B cell (primary cell): ENCODE measurements at regions of chr5 and their contacts with region 1.

Region 1: GRCh38 chr5:1380011-1380817 is 35.3 kb upstream of the CLPTM1L start:
- DNase-seq: peak; percentile 83
- ATAC-seq: peak; percentile 93
- H3K4me3 ChIP-seq: peak overlapping the region in 4 of 5 experiments; percentile 21 to 56 (median 39)
- H3K4me3 Mint-ChIP-seq: peak overlapping the region; percentile 85
- H3K27ac ChIP-seq: no peak overlapping the region
- H3K27ac Mint-ChIP-seq: peak overlapping the region; percentile 74
- H3K4me1 ChIP-seq: peaks cover 5 to 12% of the 10 kb centered on the region in 2 donors
- H3K4me1 Mint-ChIP-seq: peaks cover 22% of the 10 kb centered on the region
- H3K27me3 ChIP-seq: no peaks in the 10 kb centered on the region
- H3K27me3 Mint-ChIP-seq: no peaks in the 10 kb centered on the region
- CTCF ChIP-seq: peak; percentile 96

Region 2: DNA sequence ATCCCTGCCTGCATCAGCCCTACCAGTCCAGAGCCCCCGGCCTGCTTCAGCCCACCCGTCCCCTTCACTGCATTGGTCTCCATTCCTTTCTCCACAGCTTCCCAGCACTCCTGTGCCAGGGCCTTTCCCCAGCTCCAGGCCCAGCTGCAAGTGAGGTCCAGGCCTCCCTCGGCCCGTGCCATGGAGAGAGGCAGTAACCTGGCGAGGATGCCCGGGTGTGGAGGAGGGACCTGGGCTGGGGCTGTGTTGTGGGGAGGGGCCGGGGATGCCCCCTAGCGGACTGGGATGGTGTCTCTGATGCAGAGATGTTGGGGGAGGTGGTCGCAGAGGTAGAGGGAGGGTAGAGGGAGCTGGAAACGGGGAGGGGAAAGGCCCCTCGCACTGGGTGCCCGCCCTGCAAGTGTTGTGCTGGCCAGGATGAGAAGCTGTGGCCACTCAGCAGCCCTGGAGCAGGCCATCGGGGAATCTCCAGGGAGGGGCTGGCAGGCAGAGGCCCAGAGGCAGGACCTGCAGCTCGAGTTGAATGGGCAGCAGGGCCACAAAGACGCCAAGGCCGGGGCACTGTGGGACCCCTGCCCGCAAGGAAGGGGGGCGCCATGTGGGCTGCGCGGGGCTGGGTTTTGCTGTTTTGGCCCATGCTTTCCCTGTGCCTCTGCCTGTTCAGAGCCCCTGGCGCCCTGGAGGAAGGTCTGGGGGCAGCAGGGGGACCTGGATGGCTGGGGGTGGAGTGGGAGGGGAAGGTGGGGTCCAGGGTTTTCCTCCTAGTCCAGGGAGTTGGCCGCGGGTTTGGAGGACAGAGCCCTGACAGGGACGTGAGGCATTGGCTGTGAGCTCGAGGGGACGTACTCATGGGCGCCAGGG is 397.6 kb before region 1 on chr5:
- CTCF ChIA-PET with region 1: no interaction called
- POLR2A ChIA-PET with region 1: no interaction called
- intact Hi-C with region 1: no loop called
- DNase-seq: no peak
- ATAC-seq: no peak
- H3K4me3 ChIP-seq: no peak overlapping the region
- H3K4me3 Mint-ChIP-seq: no peak overlapping the region
- H3K27ac ChIP-seq: no peak overlapping the region
- H3K27ac Mint-ChIP-seq: no peak overlapping the region
- H3K4me1 ChIP-seq: no peaks in the 10 kb centered on the region
- H3K4me1 Mint-ChIP-seq: no peaks in the 10 kb centered on the region
- H3K27me3 ChIP-seq: peaks cover 0 to 17% (median 3%) of the 10 kb centered on the region in 4 experiments
- H3K27me3 Mint-ChIP-seq: peaks cover 28% of the 10 kb centered on the region
- CTCF ChIP-seq: no peak

Region 3: DNA sequence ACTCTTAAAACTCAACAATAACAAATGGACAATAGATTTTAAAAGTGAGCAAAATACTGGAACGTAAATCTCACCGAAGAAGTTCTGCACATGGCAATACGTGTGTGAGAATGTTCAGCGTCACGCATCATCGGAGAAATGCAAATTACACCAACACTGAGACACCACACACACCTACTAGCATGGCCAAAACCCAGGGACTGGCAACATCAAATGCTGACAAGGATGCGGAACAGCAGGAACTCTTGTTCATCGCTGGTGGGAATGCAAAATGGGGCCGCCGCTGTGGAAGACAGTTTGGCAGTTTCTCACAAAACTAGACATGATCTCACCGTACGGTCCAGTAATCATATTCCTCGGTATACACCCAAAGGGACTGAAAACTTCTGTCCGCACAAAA is 13.7 kb before region 1 on chr5:
- CTCF ChIA-PET with region 1: interaction called, 38 read pairs
- POLR2A ChIA-PET with region 1: interaction called, 16 read pairs
- intact Hi-C with region 1: loop called (anchors 1 kb)
- DNase-seq: peak; percentile 77
- ATAC-seq: peak; percentile 85
- H3K4me3 ChIP-seq: peak overlapping the region in 1 of 5 experiments; percentile 22
- H3K4me3 Mint-ChIP-seq: peak overlapping the region; percentile 75
- H3K27ac ChIP-seq: no peak overlapping the region
- H3K27ac Mint-ChIP-seq: peak overlapping the region; percentile 80
- H3K4me1 ChIP-seq: peaks cover 35 to 41% of the 10 kb centered on the region in 2 donors
- H3K4me1 Mint-ChIP-seq: peaks cover 42% of the 10 kb centered on the region
- H3K27me3 ChIP-seq: peaks cover 0 to 16% (median 5%) of the 10 kb centered on the region in 4 experiments
- H3K27me3 Mint-ChIP-seq: peaks cover 11% of the 10 kb centered on the region
- CTCF ChIP-seq: no peak

Region 4: DNA sequence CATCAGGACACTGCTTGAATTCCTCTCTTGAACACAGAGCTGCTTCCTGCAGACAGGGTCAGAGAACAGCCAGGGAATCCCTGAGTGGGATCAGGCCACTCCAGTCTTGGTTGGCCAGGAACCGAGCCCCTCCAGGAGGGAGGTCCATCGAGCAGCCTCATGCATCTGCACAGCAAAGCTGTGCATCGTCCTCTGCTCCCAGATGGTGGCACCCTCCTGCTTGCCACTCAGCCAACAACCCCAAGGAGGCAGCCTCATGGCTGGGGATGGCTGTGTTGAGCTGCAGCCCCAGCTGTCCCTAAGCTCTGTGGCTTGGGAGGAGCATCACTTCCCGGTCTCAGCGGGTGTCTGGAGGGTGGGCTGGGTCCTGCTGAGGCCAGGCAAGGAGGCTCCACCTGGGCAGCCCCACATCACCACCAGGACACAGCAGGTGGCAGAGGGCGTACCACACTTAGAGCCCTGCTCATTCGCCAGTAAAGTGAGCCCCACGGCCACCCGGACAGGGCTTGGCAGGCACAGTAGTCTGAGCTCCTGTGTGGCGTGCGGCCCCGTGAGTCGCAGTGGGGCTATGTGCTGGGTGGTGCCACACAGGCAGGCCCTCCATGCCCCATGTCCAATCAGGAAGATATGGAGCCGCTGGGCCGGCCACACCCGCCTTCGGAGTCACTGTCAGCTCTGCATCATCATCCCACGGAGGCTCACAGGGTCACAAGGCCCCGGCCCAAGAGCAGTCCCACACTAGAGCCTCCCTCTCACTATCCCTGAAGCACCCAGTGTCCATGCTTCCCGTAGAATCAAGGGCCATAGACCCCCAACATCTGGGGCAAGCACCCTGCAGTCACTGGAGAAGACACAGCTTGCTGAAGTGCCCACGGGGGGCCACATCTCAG is 131.7 kb after region 1 on chr5:
- CTCF ChIA-PET with region 1: interaction called, 3 read pairs
- POLR2A ChIA-PET with region 1: interaction called, 10 read pairs
- intact Hi-C with region 1: no loop called
- DNase-seq: peak; percentile 61
- ATAC-seq: peak; percentile 54
- H3K4me3 ChIP-seq: no peak overlapping the region
- H3K4me3 Mint-ChIP-seq: no peak overlapping the region
- H3K27ac ChIP-seq: peak overlapping the region in 1 of 2 donors; percentile 43
- H3K27ac Mint-ChIP-seq: peak overlapping the region; percentile 33
- H3K4me1 ChIP-seq: peaks cover 14 to 38% of the 10 kb centered on the region in 2 donors
- H3K4me1 Mint-ChIP-seq: peaks cover 44% of the 10 kb centered on the region
- H3K27me3 ChIP-seq: no peaks in the 10 kb centered on the region
- H3K27me3 Mint-ChIP-seq: no peaks in the 10 kb centered on the region
- CTCF ChIP-seq: no peak